Posterior cingulate gyrus (tissue), 11 donors: ENCODE measurements at regions of chr5 and their contacts with region 1.

Region 1: DNA sequence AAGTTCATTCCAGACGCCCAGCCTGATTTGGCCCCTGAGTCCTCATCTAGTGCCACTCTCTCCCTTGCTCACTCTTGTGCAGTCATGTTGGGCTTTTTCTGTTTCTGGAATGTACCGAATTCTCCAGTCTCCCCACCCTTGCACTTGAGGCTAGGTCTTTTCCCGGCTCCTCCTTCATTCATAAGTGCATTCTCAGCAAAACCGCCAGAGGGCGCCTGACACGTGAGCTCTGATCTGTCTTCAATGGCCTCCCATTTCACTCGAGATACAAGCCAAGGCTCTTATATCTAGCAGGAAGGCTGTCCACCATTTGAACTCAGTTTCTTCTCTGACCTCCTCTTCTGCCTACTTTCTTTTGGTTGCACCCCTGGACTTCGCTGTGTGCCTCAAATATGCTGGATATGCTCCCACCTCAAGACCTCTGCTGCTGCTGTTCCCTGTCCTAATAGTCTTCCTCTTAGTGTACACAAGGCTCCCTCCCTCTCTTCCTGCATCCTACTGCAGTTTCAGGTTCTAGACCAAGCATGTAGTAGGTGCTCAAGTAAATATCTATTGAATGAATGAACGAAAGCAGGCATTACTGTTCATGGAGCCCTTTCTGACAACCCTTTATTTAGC is 568.1 kb upstream of the WWC1 start:
- DNase-seq: peak; percentile 39 to 95 (median 77)

Region 2: GRCh38 chr5:167743685-167744464 is 20.5 kb after region 1 on chr5:
- intact Hi-C with region 1: no loop called
- DNase-seq: no peak

Region 3: DNA sequence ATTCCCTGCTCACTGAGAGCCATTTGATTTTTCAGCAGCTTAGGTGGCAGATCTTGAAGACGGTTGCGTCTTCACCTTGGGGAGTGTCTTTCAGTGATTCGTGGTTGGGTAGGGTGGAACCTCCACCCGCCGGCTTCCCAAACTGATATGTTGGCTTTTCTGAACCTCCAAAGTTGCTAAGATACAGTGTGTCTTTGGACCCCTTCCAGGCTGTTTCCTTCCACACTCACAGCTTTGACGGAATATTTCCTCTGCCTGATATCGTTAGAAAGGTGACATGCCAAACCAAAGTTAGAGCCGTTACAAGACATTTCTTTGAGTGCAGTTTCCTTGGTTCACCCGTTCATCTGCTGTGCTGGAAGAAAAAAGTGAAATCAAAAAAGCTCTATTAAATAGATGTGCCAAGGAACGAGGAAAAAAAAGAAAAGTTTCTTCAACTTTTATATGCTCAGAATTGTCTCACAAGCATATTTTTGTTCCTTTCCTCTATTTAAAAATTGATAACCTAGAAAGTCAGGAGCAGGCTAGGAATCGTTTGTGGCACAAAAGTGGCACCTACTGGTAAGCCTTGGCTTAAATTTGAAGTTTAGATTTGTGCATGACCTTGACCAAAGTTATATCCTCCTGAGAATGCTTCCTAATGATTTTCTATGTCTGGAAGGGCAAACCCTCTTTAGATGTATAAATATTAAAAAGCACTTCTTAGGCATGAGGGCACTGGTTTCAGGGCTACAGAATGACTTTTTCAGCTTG is 297.4 kb after region 1 on chr5:
- intact Hi-C with region 1: loop called (anchors 2 kb)
- DNase-seq: no peak

Region 4: GRCh38 chr5:168047043-168047668 is 323.8 kb after region 1 on chr5:
- intact Hi-C with region 1: loop called (anchors 1 kb)
- DNase-seq: peak in 6 of 10 donors; percentile 19 to 81 (median 28)

Region 5: DNA sequence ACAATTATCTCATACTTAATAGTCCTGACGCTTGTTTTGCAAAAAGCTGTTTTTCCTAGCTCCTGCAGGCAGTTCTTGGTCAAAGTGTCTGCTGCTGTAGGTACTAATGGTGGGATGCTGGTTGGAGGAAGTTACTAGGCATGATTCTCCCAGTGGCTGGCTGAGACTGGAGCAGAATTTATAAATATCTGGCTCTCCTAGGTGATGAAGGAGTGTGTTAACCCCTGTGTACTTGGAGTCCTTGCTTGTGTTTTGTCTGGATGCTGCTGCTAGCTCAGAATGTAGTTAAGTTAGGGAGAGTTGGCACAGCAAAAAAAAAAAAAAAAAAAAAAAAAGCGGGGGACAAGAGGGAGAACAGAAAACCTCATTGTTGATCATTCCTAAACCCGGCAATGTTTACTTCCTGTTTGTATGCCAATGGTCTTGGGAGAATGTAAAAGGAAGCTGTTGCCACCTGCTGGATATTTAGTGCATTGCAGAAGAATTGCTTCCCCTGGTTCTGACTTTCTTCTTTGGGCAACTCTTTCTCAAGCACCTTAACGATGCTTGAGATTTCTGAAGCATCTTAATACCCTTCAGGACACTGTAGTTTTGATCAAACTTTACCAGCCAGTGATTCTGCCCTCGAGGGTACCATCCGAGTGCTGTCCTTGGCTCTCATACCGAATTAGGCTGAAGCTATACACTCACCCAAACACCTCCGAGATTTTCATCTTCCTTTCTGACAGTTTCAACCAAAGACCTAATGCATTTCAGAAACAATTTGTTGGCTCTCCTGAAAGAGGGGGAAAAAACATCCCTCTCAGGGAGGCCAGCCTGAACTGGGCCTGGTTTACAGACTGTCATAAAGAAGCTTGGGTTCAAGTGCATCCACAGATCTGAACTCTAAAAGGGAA is 496.4 kb after region 1 on chr5:
- intact Hi-C with region 1: loop called (anchors 1 kb)
- DNase-seq: peak in 4 of 10 donors; percentile 22 to 53 (median 38)